ENCODE measurements at regions of chr4 and their contacts with region 1.

Region 1: GRCh38 chr4:42359711-42360110 is 37.6 kb upstream of the SHISA3 start:
- DNase-seq: peak; percentile 46
- H3K4me3 ChIP-seq: peak overlapping the region in 2 of 3 experiments; percentile 12 to 49
- H3K27ac ChIP-seq: no peak overlapping the region
- H3K4me1 ChIP-seq: no peaks in the 10 kb centered on the region
- H3K27me3 ChIP-seq: peaks cover 2% of the 10 kb centered on the region in 2 experiments
- CTCF ChIP-seq: no peak
- POLR2A ChIP-seq: no peak

Region 2: DNA sequence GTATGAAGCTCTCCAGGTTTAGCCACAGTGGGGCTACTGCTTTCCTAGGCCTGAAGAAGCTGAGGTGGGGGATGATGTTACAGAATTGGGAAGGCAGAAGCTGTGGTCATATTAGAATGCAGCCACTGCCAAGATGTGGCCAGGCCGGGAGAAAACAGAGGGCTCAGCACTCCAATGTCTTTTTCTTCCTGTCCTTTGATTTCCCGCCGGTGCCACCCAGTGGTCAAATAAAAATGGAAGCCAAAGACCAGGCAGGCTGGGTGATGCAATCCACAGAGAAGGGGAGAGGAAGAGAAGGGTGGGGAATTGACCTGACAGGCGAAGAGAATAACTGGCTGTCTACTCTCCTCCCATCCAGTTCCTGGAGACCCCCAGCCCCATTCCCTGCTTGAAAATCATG is 57.4 kb before region 1 on chr4:
- CTCF ChIA-PET with region 1: no interaction called
- POLR2A ChIA-PET with region 1: no interaction called
- dilution Hi-C with region 1: no loop called
- intact Hi-C with region 1: loop called (anchors 5 kb)
- DNase-seq: peak; percentile 27
- H3K4me3 ChIP-seq: no peak overlapping the region
- H3K27ac ChIP-seq: no peak overlapping the region
- H3K4me1 ChIP-seq: no peaks in the 10 kb centered on the region
- H3K27me3 ChIP-seq: peaks cover 0 to 9% of the 10 kb centered on the region in 2 experiments
- CTCF ChIP-seq: peak in 1 of 2 donors; percentile 16
- POLR2A ChIP-seq: no peak

Measured in endothelial cell of umbilical vein (primary cell).